Posterior cingulate gyrus (tissue), 11 donors: ENCODE measurements at regions of chr11 and their contacts with region 1.

Region 1: DNA sequence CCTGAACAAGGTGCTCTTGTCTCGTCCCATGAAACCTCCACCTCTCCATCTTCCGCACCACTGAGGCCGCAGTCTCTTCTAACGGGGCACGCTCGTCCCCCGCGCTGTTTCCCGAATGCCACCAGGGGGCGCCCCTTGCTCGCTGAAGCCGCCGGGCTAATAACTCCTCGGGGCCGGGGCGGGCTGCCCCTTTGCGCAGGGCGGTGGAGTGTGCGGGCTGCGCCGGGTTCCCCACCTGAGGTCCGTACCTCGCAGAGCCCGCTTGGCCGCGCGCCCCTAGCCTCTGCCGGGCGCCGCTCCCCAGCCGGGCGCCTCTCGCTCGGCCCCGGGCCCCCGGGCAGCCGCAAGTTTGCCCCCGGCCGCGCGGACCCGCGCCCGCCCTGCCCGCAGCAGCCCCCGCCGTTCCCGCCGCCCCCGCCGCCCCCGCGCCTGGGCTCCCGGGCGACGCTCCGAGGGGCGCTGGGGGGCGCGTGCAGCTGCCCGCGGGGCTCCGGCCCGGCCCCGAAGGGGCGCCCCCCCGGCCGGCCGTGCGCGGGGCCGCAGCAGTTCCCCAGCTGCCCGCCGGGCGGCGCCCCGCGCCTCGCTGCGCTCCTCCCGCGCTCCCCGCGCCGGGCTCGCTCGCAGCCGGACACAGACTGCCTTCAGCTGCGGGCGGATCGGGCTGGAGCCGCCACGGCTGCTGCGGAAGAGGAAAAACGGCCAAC is at the start of gene GRIK4:
- DNase-seq: peak; percentile 78 to 98 (median 92)

Region 2: DNA sequence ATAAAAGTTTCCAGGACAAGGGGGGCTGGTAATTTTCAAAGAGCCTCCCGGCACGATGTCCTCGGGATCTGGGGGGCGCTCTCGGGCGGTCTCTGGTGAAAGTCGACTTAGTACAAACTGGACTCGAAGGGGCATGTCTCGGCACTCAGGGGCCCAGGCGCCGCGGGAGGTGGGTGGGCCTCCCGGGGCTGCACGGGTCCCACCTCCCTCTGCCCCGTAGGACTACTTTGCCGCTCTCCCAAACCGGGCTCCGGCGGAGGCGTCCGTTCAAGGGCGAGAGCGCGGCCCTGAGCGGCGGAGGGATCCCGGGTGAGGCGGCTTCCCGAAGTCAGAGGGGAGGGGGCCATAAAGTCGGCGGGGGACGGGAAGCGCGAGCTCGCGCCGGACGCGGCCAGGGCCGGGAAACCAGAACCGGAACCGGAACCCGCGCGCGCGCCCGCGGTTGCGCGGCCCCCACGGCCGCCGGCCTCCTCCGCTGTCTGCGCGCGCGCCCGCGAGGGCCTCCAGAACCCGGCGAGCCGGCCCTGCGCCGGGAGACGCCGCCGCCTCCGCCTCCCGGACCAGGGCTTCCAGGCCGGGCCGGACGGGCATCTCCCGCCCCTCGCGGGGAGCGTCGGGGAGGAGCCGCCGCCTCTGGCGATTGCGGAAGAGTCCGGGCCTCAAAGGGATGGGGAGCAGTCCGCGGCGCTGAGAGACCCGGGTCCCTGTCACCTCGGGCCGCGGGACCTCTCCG is 175.2 kb before region 1 on chr11 and contains the start of gene ARHGEF12:
- intact Hi-C with region 1: loop called (anchors 2 kb)
- DNase-seq: peak; percentile 87 to 98 (median 91)

Region 3: GRCh38 chr11:120682866-120683265 is 171.6 kb after region 1 on chr11:
- intact Hi-C with region 1: loop called (anchors 1 kb)
- DNase-seq: no peak

Region 4: DNA sequence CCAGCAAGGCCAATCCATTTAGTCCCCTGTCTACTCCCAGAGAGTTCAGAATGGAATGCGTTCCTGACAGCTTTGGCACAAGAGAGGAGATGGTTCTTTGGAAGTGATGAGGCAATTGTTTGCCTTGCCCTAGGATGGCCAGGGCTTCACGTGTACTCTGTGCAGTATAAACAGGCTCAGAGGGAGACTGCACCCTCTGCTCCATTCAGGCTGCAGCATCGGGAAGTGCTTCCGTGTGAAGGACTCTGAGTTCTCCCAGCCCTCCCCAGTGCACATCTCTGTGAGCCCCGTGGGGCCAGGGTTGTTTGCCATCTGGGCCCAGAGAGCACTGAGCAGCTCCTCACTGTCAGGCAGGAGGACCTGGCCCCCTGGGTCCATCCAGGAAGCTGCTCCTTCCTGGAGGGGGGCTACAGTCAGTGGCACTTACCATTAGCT is 297.4 kb after region 1 on chr11:
- intact Hi-C with region 1: no loop called
- DNase-seq: no peak

Region 5: DNA sequence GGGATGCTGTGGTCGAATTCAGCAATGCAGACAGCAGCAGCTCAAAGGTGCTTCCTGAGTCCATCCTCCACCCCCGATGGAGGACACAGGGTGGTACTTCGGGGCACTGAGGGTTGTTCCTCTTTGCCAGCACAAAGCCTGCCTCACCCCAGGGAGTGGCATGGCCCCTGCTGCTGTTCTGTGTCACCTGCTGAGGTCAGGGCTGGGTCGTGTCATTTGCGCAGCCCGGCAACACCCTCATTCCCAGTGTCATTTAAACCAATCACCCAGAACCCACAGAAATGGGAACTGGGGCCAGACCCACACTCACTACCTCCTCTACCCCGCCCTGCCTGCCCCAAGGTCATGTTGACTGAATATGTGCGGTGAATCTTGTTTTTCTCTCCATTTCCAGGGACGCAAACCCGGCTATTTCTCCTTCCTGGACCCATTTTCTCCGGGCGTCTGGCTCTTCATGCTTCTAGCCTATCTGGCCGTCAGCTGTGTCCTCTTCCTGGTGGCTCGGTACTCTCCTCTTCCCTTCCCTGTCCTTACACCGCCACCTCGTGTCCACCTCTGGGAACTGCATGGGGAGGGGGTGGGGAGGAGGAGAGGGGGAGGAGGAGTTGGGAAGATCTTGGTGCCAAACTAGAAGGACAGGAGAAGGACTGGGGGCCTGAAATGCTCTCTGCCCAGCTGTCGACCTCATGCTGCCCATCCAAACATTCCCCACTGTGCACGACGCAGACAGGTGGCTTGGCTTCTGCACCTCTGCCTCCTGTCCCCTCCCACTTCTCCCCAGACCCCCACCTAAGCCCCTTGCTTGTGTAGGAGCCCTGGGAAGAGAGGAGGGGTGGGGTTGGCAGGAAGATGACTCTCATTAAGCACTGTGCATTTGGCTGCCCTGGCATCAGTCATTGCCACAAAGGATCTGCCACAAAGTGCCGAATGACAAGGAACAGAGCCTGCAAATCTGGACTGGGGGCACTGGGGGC is 441.5 kb after region 1 on chr11:
- intact Hi-C with region 1: loop called (anchors 1 kb)
- DNase-seq: peak; percentile 71 to 97 (median 86)

Region 6: DNA sequence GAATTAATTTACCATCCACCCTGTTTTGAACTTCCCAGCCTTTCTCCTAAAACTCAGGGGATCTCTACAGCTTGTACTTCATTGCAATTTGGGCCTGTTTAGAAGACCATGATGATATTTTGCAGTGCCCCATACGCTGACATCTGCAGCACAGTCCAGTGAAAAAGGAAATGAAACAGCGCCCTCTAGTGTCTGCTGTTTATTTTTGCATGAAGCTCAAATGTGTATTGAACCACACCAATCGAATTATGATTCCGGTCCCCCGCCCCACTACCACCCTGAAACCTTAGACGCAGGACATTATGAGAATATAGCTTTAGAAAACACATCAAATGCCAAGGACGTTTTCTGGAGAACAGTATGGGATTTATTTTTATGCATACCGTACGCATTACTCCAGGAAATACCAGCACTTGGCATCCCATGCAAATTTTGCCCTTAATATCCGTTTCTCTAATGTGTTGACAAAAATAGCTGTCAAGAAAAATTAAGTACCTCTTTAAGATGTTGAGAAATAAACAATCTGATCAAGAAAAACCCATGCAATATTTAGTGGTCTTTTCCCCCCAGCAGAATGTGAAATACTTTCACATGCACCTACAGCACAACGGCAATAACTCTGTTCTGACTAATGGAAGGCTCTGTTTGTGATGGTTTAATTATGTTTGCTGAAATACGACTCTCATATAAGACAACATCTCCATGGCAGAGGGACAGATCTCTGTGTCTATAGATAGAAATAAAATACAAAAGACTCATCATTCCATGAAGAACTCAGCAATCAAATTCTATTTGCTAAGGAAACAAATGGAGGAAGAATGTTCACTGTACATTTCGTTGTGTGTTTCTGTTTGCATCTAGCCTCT is 683.7 kb after region 1 on chr11:
- intact Hi-C with region 1: loop called (anchors 5 kb)
- DNase-seq: peak in 3 of 10 donors; percentile 36 to 54 (median 51)